GM10248 (cell line): ENCODE measurements at regions of chr2 and their contacts with region 1.

Region 1: GRCh38 chr2:216222650-216223352 is 113.7 kb downstream of the XRCC5 start:
- DNase-seq: peak; percentile 41
- CTCF ChIP-seq: peak; percentile 73

Region 2: GRCh38 chr2:216242365-216242764 is 19.6 kb after region 1 on chr2:
- CTCF ChIA-PET with region 1: interaction called, 16 read pairs
- POLR2A ChIA-PET with region 1: no interaction called
- DNase-seq: no peak
- CTCF ChIP-seq: no peak

Region 3: DNA sequence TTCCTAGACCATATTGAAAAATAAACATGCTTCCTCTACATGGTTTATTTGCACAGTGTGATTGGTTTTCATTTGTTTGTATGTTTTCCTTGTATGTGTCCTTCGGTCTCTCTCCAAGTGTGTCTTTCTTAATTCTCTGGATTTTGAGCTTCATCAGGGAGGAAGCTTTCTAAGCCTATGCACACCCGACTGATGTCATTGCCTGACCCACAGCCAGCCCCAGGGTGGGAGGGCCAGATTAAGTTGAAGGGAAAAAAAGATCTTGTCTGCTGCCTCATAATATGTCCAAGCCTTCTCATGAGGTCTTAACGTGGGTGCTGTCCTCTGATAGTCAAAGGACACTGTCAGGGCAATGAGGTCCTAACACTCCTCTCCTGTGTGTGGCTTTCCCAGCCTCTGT is 34.3 kb after region 1 on chr2:
- CTCF ChIA-PET with region 1: interaction called, 10 read pairs
- POLR2A ChIA-PET with region 1: no interaction called
- DNase-seq: no peak
- CTCF ChIP-seq: no peak

Region 4: GRCh38 chr2:216283038-216283900 is 60.5 kb after region 1 on chr2:
- CTCF ChIA-PET with region 1: interaction called, 13 read pairs
- POLR2A ChIA-PET with region 1: no interaction called
- DNase-seq: peak; percentile 59
- CTCF ChIP-seq: peak; percentile 44

Region 5: GRCh38 chr2:216404010-216404618 is 181.3 kb after region 1 on chr2:
- CTCF ChIA-PET with region 1: interaction called, 51 read pairs
- POLR2A ChIA-PET with region 1: no interaction called
- DNase-seq: peak; percentile 40
- CTCF ChIP-seq: peak; percentile 81

Region 6: GRCh38 chr2:216412022-216412999 is 189.5 kb after region 1 on chr2 and contains the start of gene SMARCAL1:
- CTCF ChIA-PET with region 1: interaction called, 13 read pairs
- POLR2A ChIA-PET with region 1: no interaction called
- DNase-seq: peak; percentile 94
- CTCF ChIP-seq: no peak

Region 7: GRCh38 chr2:216666461-216667233 is 443.8 kb after region 1 on chr2:
- CTCF ChIA-PET with region 1: interaction called, 18 read pairs
- POLR2A ChIA-PET with region 1: no interaction called
- DNase-seq: peak; percentile 79
- CTCF ChIP-seq: peak; percentile 99